A549 (cell line): ENCODE measurements at regions of chr14 and their contacts with region 1.

Region 1: DNA sequence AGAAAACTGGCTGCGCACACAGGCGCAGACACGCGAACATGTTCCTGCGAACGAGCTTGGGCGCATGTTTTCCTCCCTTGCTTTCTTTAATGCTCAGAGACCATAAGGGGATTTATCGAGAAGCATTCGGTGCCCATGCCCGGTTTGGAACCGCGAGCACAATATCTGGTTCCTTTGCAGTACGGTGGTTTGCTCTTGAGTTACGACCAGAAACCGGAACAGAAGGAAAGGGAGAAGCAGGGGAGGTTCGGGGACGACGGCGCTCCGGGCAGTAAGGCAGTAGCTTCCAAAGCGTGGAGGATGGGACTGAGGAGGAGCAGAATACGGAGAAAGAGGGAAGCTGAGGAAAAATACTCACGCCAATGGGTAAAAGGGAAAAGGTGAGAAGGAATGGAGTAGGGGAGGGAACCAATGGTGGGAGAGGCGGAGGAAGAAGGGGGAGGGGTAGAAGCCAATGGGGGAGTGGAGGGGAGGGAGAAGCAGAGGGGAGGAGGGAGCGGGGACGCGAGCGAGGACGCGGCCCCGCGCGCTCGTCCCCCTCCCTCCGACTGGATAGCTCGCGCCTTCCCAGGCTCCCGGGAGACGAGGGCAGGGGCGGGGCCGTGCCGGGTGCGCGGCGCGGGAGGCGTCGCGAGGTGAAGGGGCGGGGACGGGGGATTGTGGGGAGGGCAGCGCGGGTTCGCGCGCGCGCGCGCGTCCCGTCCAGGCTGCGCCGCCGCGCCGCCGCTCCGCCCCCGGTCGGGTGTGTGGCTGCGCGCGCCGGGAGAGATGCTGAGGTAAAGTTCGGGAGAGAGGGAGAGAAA is 625 bp upstream of the ARHGAP5 start:
- DNase-seq: peak; percentile 74 to 97
- ATAC-seq: peak; percentile 75 to 82
- H3K4me3 ChIP-seq: peak overlapping the region; percentile 83
- H3K27ac ChIP-seq: peak overlapping the region; percentile 96 to 99
- H3K4me1 ChIP-seq: peaks cover 37% of the 10 kb centered on the region
- CTCF ChIP-seq: no peak
- EP300 ChIP-seq: no peak
- POLR2A ChIP-seq: peak; percentile 83
- RAD21 ChIP-seq: peak in 1 of 2 experiments; percentile 9; a peak in 1 of 5 replicates

Region 2: GRCh38 chr14:31926123-31926522 is 150.4 kb before region 1 on chr14:
- CTCF ChIA-PET with region 1: interaction called, 10 read pairs
- POLR2A ChIA-PET with region 1: interaction called, 14 read pairs
- DNase-seq: peak; percentile 59 to 71
- ATAC-seq: no peak
- H3K4me3 ChIP-seq: no peak overlapping the region
- H3K27ac ChIP-seq: peak overlapping the region in 1 of 2 experiments; percentile 86; a peak in 4 of 6 replicates
- H3K4me1 ChIP-seq: peaks cover 45% of the 10 kb centered on the region
- CTCF ChIP-seq: peak; percentile 67
- EP300 ChIP-seq: no peak
- POLR2A ChIP-seq: no peak
- RAD21 ChIP-seq: peak; percentile 58 to 67

Region 3: DNA sequence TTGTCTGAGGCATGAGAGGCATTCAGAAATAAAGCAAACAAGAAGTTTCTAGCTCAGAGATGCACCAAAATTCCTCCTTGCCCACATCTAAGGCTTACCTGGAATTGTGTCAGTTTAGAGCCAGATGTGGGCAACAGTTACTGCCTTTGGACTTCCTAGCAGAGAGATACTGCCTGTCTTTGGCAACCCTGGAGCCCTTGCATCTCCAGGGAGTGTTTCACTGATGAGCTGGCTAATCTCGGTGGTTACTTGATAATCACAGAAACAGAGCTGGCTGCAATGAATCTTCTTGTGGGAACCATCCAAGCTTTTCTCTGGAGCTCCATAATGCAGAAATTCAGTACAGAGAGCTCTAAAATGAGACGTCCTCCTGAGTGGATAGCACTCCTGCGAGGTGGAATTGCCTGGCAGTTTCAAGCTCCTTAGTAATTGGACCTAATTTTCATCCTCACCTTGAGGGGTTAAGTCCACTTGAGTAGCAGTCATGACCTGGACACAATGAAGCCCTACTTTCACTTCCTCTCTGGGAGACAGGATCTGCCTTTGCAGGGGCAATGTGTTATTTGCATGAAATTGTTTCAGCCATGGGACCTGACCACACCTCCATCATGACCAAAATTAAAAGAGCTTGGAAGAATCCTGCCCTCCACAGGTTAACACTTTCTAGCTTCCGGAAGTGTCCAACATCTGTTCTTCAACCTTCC is 108.2 kb before region 1 on chr14:
- CTCF ChIA-PET with region 1: no interaction called
- POLR2A ChIA-PET with region 1: no interaction called
- DNase-seq: no peak
- ATAC-seq: peak; percentile 60 to 65; a peak in 4 of 6 replicates
- H3K4me3 ChIP-seq: no peak overlapping the region
- H3K27ac ChIP-seq: peak overlapping the region; percentile 77 to 78
- H3K4me1 ChIP-seq: peaks cover 49% of the 10 kb centered on the region
- CTCF ChIP-seq: no peak
- EP300 ChIP-seq: no peak
- POLR2A ChIP-seq: no peak
- RAD21 ChIP-seq: no peak

Region 4: GRCh38 chr14:32009976-32010863 is 66.3 kb before region 1 on chr14:
- CTCF ChIA-PET with region 1: interaction called, 9 read pairs
- POLR2A ChIA-PET with region 1: interaction called, 19 read pairs
- DNase-seq: peak; percentile 81 to 95
- ATAC-seq: peak; percentile 88 to 90
- H3K4me3 ChIP-seq: no peak overlapping the region
- H3K27ac ChIP-seq: peak overlapping the region; percentile 89 to 92
- H3K4me1 ChIP-seq: peaks cover 72% of the 10 kb centered on the region
- CTCF ChIP-seq: no peak
- EP300 ChIP-seq: peak; percentile 83 to 87; a peak in 4 of 5 replicates
- POLR2A ChIP-seq: no peak
- RAD21 ChIP-seq: peak; percentile 44 to 59; a peak in 4 of 5 replicates

Region 5: DNA sequence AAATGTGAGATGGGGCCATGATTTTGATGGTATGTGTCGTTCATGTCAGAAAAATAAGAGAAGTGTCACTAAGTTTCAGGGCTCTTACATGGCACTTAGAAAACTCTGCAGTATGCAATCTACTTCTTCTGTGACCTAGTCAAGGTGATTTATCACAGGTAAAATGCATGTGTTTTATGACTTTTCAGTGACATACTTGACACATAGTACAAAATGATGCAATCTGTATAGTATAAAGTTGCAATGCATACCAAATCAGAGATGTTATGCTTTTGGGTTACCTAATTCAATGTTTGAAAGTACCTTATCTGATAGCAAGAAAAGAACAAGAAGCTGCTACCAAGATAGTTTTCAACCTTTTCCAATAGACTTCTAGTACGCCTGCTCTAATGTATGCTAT is 21.3 kb before region 1 on chr14:
- CTCF ChIA-PET with region 1: no interaction called
- POLR2A ChIA-PET with region 1: no interaction called
- DNase-seq: no peak
- ATAC-seq: no peak
- H3K4me3 ChIP-seq: no peak overlapping the region
- H3K27ac ChIP-seq: no peak overlapping the region
- H3K4me1 ChIP-seq: no peaks in the 10 kb centered on the region
- CTCF ChIP-seq: no peak
- EP300 ChIP-seq: no peak
- POLR2A ChIP-seq: no peak
- RAD21 ChIP-seq: no peak

Region 6: DNA sequence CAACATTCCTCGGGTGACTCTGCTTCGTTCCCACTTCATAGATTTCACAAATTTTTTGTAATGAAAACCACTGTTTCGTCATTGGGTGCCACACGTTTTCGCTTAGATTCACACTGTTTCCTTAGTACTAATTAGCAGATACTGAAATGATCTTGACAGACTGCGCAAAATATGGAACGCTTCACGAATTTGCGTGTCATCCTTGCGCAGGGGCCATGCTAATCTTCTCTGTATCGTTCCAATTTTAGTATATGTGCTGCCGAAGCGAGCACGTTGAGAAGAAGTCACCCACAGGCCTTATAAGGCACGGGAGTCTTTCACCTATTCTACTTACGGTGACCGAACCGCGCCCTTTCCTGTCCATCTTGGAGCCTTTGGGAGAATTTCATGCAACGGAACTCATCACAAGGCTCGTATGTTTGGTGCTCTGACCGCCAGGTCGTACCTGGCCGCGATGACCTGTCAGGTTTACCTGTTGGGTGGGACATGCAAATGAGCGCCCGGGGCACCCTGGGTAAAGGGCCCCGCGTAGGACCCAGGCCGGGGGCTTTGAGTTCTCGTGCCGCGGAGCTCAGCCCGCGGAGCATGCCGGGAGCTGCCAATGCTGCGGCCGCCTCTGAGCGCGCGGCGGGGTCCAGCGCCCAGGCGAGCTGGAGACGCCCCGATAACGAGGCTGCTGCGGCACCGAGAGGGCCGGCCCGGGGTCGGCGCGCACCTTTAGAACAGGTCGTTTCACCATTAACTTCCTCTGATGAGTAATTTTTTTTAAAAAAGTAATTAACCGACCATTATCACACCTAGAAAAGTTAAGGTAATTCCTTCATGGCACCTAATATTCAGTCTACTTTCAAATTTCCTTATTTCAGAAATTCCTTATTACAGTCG is 126.8 kb after region 1 on chr14 and contains the start of gene RNU6-8:
- CTCF ChIA-PET with region 1: interaction called, 5 read pairs
- POLR2A ChIA-PET with region 1: interaction called, 35 read pairs
- DNase-seq: peak; percentile 62 to 92
- ATAC-seq: peak; percentile 80 to 88
- H3K4me3 ChIP-seq: peak within 1 kb of the TSS; percentile 60
- H3K27ac ChIP-seq: peak within 1 kb of the TSS; percentile 82 to 91
- H3K4me1 ChIP-seq: peaks cover 11% of the 10 kb centered on the region; the same call in 1 of the 3 replicates
- CTCF ChIP-seq: no peak
- EP300 ChIP-seq: no peak
- POLR2A ChIP-seq: peak; percentile 65
- RAD21 ChIP-seq: no peak; a peak in 1 of 5 replicates
- polyA plus RNA-seq, gene RNU6-8: not detected in 2 replicates

Region 7: GRCh38 chr14:32265584-32265983 is 189.1 kb after region 1 on chr14:
- CTCF ChIA-PET with region 1: no interaction called
- POLR2A ChIA-PET with region 1: no interaction called
- DNase-seq: no peak
- ATAC-seq: no peak
- H3K4me3 ChIP-seq: no peak overlapping the region
- H3K27ac ChIP-seq: no peak overlapping the region
- H3K4me1 ChIP-seq: no peaks in the 10 kb centered on the region
- CTCF ChIP-seq: no peak
- EP300 ChIP-seq: no peak
- POLR2A ChIP-seq: no peak
- RAD21 ChIP-seq: no peak